ENCODE measurements at regions of chr2 and their contacts with region 1.

Region 1: GRCh38 chr2:207473049-207473930 is 56.5 kb upstream of the CREB1 start:
- DNase-seq: peak; percentile 18 to 90 (median 74)

Region 2: DNA sequence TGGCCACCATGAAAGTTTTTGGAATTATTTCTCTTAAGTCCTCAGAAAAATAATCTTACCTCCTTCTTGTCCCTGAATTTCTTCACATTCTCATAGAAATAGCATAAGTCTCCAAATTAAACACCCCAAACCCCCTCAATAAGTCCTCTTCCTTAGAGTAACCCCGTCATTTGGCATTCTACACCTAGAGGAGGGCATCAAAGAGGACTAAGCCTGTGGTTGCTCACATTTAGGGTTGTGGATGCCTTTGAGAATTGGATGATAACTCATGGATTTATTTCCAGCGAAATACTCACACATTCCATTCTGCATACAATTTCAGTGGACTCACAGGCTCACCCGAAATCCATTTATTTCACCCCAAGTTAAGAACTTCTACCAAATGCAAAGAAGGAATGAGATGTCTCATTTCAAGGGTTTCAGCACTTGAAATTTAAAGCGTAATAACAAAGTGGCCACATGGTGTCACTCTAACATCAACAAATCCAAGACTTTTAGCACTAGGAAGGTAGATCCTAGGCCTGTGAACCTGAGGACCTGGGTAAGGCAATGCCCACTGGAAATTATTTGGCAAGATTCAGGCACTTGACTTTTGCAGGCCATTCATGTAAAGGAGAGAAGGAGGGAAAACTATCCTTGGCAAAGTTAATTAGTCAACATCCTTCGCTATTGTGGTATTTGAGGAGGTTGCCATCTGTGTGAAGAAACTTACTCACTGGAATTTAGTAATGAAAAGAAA is 779.7 kb before region 1 on chr2:
- intact Hi-C with region 1: loop called (anchors 2 kb)
- DNase-seq: peak in 17 of 42 donors; percentile 8 to 77 (median 45)

Region 3: GRCh38 chr2:206800506-206801417 is 672.5 kb before region 1 on chr2:
- intact Hi-C with region 1: loop called (anchors 5 kb)
- DNase-seq: peak; percentile 50 to 87 (median 71)

Region 4: GRCh38 chr2:206981739-206982340 is 491.4 kb before region 1 on chr2:
- intact Hi-C with region 1: loop called (anchors 2 kb)
- DNase-seq: peak; percentile 76 to 95 (median 90)

Region 5: DNA sequence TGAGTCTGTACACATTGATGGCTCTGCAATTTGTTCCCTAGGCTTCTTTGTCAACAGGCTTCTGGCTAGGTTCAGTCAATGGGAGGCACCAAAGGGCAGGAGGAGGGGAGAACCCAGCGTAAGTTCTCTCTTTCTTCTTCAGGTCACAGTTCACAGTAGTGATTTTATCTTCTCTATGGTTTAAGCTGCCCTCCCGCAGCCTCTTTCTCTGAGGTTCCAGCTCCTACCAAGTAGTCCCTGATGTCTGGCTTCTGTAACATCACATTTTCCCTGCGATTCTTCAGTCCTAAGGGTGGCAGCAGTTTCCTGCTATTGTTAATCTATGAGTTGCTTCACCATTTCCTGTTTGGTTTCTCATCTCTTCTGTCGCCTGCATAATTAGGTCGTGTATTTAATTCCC is 426.6 kb before region 1 on chr2:
- intact Hi-C with region 1: loop called (anchors 10 kb)
- DNase-seq: peak in 15 of 42 donors; percentile 15 to 70 (median 36)

Measured in head of caudate nucleus (tissue), 42 donors.